Cardiac septum (tissue), 1 donor: ENCODE measurements at regions of chr3 and their contacts with region 1.

Region 1: DNA sequence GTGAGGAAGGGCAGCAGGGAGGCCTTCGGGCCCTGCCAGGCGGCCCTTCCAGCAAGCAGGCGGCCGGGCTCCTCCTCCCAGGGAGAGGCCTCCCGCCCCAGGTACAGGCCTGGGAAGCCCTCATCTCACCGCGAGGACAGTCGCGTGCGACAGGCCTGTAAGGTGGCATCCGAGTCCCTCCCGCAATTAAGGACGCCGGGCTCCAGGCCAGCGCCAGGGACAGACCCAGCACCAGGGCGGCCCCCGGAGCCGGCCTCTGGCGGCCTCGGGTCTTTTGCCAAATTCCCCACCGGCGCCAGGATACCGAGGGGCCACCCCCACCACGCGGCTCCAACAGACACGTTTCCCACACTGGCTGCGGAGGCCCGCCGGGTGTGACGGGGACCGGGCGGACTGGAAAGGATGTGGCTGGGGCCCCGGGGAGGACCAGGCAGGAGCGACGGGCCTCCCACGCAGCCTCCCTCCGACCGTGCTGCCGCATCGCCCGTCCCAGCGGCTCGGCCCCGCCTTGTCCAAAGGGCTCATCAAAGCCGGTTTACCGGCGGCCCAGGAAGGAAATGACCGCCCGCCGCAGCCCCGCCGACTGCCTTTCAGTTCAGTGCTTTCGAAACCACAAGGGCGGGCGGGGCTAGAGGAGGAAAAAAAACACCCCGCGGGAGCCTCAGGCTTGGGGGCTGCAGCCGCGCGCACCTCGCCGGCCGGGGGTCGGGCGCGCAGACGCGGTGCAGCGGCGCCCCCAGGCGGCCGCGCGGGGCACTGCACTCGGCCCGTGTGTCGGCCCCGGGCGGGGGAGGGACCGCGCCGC is 11.3 kb downstream of the XXYLT1 start:
- DNase-seq: peak; percentile 94

Region 2: DNA sequence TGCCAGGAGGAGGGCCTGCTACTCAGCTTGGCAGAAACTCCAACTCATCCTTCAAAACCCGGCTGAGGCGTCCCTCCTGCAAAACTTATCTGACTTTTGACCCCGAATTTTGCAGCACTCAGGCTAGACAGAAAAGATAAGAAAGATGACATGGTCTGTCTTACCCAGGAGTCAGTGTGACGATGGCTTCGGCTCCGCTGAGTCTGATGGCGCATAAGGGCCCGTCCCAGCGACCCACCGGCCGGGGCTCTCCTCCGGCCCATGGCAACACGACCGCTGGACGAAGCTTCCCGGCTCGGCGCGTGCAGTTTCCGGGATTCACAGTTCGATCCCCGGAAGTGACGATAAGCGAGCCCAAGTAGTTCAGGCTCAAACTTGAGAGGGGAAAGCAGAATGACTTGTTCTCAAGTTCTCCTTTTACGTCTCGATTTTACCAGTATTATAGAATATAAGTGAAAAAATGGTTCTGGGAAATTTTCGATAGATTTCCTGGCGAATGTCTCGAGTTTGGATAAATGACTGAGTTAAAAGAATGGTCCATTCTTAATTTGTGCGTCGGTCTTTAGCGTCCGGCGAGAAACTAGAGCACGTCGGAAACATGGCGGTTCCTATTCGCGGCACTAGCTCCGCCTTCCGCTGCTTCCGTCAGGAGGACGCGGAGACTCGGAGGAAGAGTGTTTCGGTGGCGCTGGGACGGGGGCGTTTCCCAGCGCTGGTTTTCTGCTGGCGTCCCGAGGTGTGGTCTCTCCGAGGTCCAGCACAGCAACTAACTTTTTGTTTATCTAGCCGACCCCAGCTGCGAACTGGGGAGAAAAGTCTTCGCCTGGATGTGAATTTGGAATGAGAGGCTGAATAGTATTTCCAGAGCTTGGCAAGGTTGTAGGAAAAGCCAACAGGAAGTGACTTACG is 587.5 kb before region 1 on chr3 and contains the start of gene LSG1:
- intact Hi-C with region 1: loop called (anchors 2 kb)
- DNase-seq: peak; percentile 95
- total RNA-seq, gene LSG1: 21.3 TPM

Region 3: GRCh38 chr3:195001961-195002861 is 257.5 kb before region 1 on chr3:
- intact Hi-C with region 1: loop called (anchors 2 kb)
- DNase-seq: peak; percentile 81

Region 4: DNA sequence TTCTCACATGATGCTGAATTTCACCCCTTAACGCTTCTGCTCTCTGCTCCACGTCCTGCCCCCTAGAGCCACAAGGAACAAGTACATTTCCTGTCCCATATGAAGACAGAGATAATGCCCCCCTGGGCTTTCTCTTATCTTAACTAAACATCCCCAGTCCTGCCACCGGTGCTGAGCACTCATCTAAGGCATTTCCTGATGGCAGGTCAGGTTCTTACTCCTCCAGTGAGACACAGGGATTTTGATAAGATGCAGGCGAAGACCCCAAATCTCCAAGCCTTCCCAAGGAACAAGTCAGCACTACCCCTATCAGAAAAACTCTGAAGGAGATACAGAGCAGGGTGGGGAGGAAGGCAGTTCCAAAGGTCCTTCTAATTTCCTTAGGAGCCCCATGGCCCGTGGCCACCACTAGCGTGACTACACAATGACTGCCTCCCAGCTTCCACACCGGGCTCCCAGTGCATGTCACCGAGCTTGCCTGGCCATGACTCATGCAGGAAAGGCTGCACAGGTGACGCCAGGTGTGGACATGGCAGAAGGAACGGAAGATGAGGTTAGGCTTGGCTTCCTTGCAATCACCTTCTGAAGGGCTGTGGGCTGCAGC is 141.6 kb before region 1 on chr3:
- intact Hi-C with region 1: loop called (anchors 5 kb)
- DNase-seq: no peak

Region 5: GRCh38 chr3:195226900-195227447 is 32.7 kb before region 1 on chr3:
- intact Hi-C with region 1: no loop called
- DNase-seq: no peak